Cardiac septum (tissue), 1 donor: ENCODE measurements at regions of chr2 and their contacts with region 1.

Region 1: GRCh38 chr2:202178342-202178958 is 59.9 kb downstream of the SUMO1 start:
- DNase-seq: no peak

Region 2: GRCh38 chr2:201795607-201796477 is 382.6 kb before region 1 on chr2:
- intact Hi-C with region 1: loop called (anchors 1 kb)
- DNase-seq: no peak

Region 3: DNA sequence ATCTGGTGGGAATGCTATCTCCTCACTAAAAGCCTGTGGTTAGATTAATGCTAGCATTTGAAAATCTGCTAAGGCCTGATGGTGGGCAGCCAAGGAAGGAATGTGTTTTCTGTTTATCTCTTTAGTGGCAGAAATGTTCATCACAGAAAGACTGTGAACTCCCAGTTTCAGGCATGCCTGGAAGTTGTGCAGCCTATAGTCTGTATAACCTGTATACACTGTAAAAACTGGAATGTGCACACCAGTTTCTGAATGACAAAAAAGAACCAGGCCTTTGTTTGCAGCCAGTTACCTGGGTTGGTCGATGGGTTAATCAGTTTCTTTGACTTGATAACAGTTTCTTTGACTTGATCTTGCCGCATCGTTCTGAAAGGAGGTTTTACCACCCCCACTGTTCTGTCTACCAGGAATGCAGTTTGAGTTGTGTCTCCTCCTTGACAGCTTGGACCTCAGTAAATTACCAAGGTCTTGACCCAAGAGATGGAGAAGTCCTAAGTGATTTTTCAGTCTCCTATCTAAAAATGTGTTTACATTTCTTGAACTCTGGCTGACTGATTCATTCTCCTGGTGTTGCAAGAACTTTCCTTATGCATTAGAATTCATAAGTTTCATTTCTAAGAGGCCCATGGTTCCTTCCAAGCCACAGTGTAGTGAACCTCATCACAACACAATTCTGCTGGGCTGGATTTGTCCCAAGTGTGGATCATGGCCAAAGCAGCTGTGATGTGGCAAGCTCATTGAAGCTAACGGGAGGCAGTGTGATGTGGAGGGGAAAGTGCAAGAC is 43.2 kb before region 1 on chr2:
- intact Hi-C with region 1: no loop called
- DNase-seq: peak; percentile 80